MCF 10A (cell line): ENCODE measurements at regions of chr1 and their contacts with region 1.

Region 1: GRCh38 chr1:209875515-209875914 is 47.7 kb downstream of the UTP25 start:
- DNase-seq: peak; percentile 83
- H3K4me3 Mint-ChIP-seq: no peak overlapping the region
- H3K27ac Mint-ChIP-seq: peak overlapping the region; percentile 98
- H3K4me1 Mint-ChIP-seq: peaks cover 89% of the 10 kb centered on the region
- H3K27me3 Mint-ChIP-seq: no peaks in the 10 kb centered on the region
- CTCF ChIP-seq: peak; percentile 33

Region 2: GRCh38 chr1:209805875-209806760 is 69.4 kb before region 1 on chr1 and contains the start of gene IRF6:
- CTCF ChIA-PET with region 1: interaction called, 5 read pairs
- POLR2A ChIA-PET with region 1: interaction called, 13 read pairs
- intact Hi-C with region 1: no loop called
- DNase-seq: peak; percentile 99
- H3K4me3 Mint-ChIP-seq: peak within 1 kb of the TSS; percentile 90
- H3K27ac Mint-ChIP-seq: peak within 1 kb of the TSS; percentile 92
- H3K4me1 Mint-ChIP-seq: peaks cover 74% of the 10 kb centered on the region
- H3K27me3 Mint-ChIP-seq: no peaks in the 10 kb centered on the region
- CTCF ChIP-seq: no peak
- total RNA-seq, gene IRF6: 87.8 and 106 TPM in 2 replicates

Region 3: DNA sequence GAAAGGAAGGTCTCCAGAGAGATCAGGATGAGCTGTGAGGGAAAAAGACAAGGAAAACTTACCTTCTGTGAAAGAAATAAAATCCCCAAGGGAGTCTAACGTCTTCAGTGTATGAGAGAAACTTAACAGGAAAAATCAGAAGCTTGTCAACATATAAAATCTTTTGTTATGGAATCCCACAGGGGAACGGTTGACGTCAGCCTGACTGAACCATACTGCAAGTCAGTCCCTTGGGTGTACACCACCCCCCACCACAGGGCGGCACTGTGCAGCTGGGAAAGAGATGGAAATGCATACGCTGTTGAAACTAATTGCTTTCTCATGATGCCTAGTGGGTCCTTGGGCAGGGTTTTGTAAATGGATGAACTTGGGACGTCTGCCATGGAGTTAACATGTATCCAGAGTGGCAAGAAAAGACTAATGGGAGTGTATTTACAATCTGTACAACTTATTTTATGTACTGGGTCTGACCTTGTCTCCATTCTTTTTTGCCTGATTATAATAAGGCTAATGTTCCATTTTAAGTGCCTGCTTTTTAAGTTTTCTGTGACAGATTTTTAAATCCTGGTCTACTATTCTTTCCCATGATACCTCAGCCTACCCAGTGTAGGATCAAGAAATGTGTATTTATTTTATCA is 25.1 kb before region 1 on chr1:
- CTCF ChIA-PET with region 1: interaction called, 201 read pairs
- POLR2A ChIA-PET with region 1: interaction called, 14 read pairs
- intact Hi-C with region 1: no loop called
- DNase-seq: peak; percentile 80
- H3K4me3 Mint-ChIP-seq: no peak overlapping the region
- H3K27ac Mint-ChIP-seq: peak overlapping the region; percentile 47
- H3K4me1 Mint-ChIP-seq: peaks cover 26% of the 10 kb centered on the region
- H3K27me3 Mint-ChIP-seq: no peaks in the 10 kb centered on the region
- CTCF ChIP-seq: peak; percentile 92

Region 4: GRCh38 chr1:209890641-209891330 is 15.3 kb after region 1 on chr1:
- CTCF ChIA-PET with region 1: interaction called, 21 read pairs
- POLR2A ChIA-PET with region 1: interaction called, 156 read pairs
- intact Hi-C with region 1: no loop called
- DNase-seq: peak; percentile 46
- H3K4me3 Mint-ChIP-seq: no peak overlapping the region
- H3K27ac Mint-ChIP-seq: peak overlapping the region; percentile 91
- H3K4me1 Mint-ChIP-seq: peaks cover 51% of the 10 kb centered on the region
- H3K27me3 Mint-ChIP-seq: no peaks in the 10 kb centered on the region
- CTCF ChIP-seq: no peak

Region 5: GRCh38 chr1:209937996-209938959 is 62.8 kb after region 1 on chr1 and contains the start of gene SYT14:
- CTCF ChIA-PET with region 1: interaction called, 4 read pairs
- POLR2A ChIA-PET with region 1: interaction called, 3 read pairs
- intact Hi-C with region 1: loop called (anchors 5 kb)
- DNase-seq: no peak
- H3K4me3 Mint-ChIP-seq: peak within 1 kb of the TSS; percentile 68
- H3K27ac Mint-ChIP-seq: no peak within 1 kb of the TSS
- H3K4me1 Mint-ChIP-seq: peaks cover 7% of the 10 kb centered on the region
- H3K27me3 Mint-ChIP-seq: peaks cover 5% of the 10 kb centered on the region
- CTCF ChIP-seq: no peak
- total RNA-seq, gene SYT14: 0.79 and 1.4 TPM in 2 replicates